HEK293 (cell line): ENCODE measurements at regions of chr1 and their contacts with region 1.

Region 1: DNA sequence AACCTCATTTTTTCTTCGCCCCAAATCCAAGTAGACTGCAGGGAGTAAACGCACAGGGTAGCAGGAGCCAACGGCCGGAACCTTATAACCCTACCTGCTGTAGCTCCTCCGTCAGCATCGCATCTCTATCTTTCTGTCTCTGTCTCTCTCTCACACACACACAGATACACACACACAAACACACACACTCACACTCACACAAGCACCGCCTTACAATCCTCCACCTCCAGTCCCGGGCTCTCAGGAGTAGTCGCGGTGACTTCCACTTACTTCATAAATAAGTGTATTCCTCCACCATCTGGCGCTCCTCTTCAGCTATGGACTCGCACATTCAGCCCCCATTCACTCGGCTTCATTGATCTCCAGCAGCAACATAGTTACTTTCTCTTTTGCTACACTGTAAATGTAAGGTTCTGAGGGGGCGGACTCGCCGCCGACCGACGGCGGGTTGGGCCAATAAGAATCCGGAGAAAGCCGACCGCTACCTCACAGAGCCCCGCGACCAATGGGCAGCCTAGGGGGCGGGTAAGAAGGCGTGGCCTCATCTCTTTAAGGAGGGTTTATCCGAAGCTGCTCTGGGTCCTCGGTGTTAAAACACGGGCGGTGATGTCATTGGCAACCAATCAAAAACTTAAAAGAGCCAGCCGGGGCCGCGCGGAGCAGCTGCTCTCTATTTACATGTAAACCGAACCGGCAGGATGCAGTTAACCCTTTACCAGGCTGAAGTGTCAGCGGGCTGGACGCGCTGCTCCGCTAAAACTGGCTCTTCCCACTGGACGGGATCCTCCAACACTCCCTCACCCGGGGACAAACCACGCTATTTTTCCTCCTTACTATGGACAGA is at the start of gene DUSP10:
- H3K4me3 ChIP-seq: peak within 1 kb of the TSS; percentile 60
- H3K27ac ChIP-seq: peak within 1 kb of the TSS; percentile 92
- H3K4me1 ChIP-seq: peaks cover 3% of the 10 kb centered on the region
- CTCF ChIP-seq: peak; percentile 74

Region 2: GRCh38 chr1:221708987-221709386 is 32.9 kb before region 1 on chr1:
- CTCF ChIA-PET with region 1: no interaction called
- POLR2A ChIA-PET with region 1: interaction called, 15 read pairs
- H3K4me3 ChIP-seq: no peak overlapping the region
- H3K27ac ChIP-seq: no peak overlapping the region
- H3K4me1 ChIP-seq: peaks cover 2% of the 10 kb centered on the region; the same call in 1 of the 2 replicates
- CTCF ChIP-seq: no peak

Region 3: GRCh38 chr1:221715321-221716169 is 26.4 kb before region 1 on chr1:
- CTCF ChIA-PET with region 1: no interaction called
- POLR2A ChIA-PET with region 1: interaction called, 17 read pairs
- H3K4me3 ChIP-seq: no peak overlapping the region
- H3K27ac ChIP-seq: 0 out of 2 replicates have a peak overlapping the region, but pooled peaks have one; percentile 37
- H3K4me1 ChIP-seq: peaks cover 25% of the 10 kb centered on the region
- CTCF ChIP-seq: no peak

Region 4: GRCh38 chr1:221729771-221730330 is 12.1 kb before region 1 on chr1:
- CTCF ChIA-PET with region 1: no interaction called
- POLR2A ChIA-PET with region 1: interaction called, 18 read pairs
- H3K4me3 ChIP-seq: no peak overlapping the region
- H3K27ac ChIP-seq: no peak overlapping the region
- H3K4me1 ChIP-seq: peaks cover 3% of the 10 kb centered on the region; the same call in 1 of the 2 replicates
- CTCF ChIP-seq: no peak